MCF 10A (cell line): ENCODE measurements at regions of chr7 and their contacts with region 1.

Region 1: GRCh38 chr7:80859272-80859970 is 59.4 kb downstream of the SEMA3C start:
- DNase-seq: peak; percentile 65
- H3K4me3 Mint-ChIP-seq: peak overlapping the region; percentile 27
- H3K27ac Mint-ChIP-seq: peak overlapping the region; percentile 94
- H3K4me1 Mint-ChIP-seq: peaks cover 37% of the 10 kb centered on the region
- H3K27me3 Mint-ChIP-seq: no peaks in the 10 kb centered on the region
- CTCF ChIP-seq: no peak

Region 2: GRCh38 chr7:80826520-80827238 is 32.7 kb before region 1 on chr7:
- CTCF ChIA-PET with region 1: interaction called, 3 read pairs
- POLR2A ChIA-PET with region 1: interaction called, 16 read pairs
- intact Hi-C with region 1: no loop called
- DNase-seq: peak; percentile 90
- H3K4me3 Mint-ChIP-seq: no peak overlapping the region
- H3K27ac Mint-ChIP-seq: no peak overlapping the region
- H3K4me1 Mint-ChIP-seq: peaks cover 44% of the 10 kb centered on the region
- H3K27me3 Mint-ChIP-seq: no peaks in the 10 kb centered on the region
- CTCF ChIP-seq: no peak

Region 3: GRCh38 chr7:81079746-81080145 is 220.3 kb after region 1 on chr7:
- CTCF ChIA-PET with region 1: no interaction called
- POLR2A ChIA-PET with region 1: no interaction called
- intact Hi-C with region 1: no loop called
- DNase-seq: no peak
- H3K4me3 Mint-ChIP-seq: no peak overlapping the region
- H3K27ac Mint-ChIP-seq: no peak overlapping the region
- H3K4me1 Mint-ChIP-seq: peaks cover 9% of the 10 kb centered on the region
- H3K27me3 Mint-ChIP-seq: no peaks in the 10 kb centered on the region
- CTCF ChIP-seq: no peak